Left ventricle myocardium inferior (tissue), 1 donor: ENCODE measurements at regions of chr17 and their contacts with region 1.

Region 1: GRCh38 chr17:34645594-34645993 is 66.2 kb downstream of the TMEM132E start:
- DNase-seq: no peak
- H3K4me3 ChIP-seq: no peak overlapping the region
- H3K27ac ChIP-seq: no peak overlapping the region
- H3K4me1 ChIP-seq: no peaks in the 10 kb centered on the region
- H3K27me3 ChIP-seq: peaks cover 88% of the 10 kb centered on the region
- CTCF ChIP-seq: no peak

Region 2: DNA sequence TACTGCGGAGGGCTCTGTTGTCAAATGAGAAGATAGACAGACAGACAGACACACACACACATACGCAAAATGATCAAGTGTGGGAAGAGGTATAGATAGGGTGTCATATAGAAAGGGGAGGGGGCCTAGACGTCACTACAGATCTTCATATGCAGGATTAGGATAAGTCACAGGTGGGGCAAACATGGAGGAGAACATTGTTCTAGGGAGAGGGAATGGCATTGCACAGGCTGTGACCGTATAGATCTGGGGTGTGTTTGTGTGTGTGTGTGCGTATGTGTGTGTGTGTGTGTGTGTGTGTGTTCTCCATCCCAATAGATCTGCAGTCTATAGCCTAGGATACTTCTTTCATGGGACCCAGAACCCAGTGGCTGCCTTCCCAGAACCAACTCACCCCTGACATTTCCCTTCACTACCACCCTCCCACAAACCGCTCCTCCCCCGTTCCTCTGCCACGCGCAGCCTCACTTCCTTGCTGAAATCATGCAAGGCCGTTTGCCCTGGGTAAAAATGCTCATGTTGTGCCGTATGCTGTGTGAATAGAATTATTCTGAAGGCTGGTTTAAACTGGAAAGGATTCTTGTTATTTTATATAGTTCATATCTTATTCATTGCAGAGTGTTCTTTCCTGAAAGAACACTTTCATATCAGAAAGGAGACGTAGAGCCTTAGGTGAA is 232.0 kb before region 1 on chr17:
- intact Hi-C with region 1: loop called (anchors 10 kb)
- DNase-seq: no peak
- H3K4me3 ChIP-seq: no peak overlapping the region
- H3K27ac ChIP-seq: no peak overlapping the region
- H3K4me1 ChIP-seq: no peaks in the 10 kb centered on the region
- H3K27me3 ChIP-seq: peaks cover 95% of the 10 kb centered on the region
- CTCF ChIP-seq: no peak

Region 3: DNA sequence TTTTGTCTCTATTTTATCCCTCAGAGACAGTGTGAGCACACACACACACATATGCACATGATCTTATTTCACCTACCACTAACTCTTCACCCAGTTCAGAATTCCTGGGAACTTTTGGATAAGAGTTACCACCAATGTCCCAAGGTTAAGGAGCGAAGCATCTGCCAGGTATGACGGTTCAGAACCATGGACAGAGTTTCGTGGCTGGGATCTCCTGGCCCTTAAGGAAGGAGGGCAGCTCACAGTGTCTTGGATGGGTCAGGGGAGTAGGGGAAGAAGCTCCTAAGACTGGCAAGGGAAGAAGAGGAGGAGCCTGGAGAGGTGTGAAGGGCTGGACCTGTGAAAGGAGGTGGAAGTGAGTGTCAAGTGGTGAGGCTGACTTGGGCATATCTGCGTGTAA is 89.2 kb before region 1 on chr17:
- intact Hi-C with region 1: no loop called
- DNase-seq: no peak
- H3K4me3 ChIP-seq: no peak overlapping the region
- H3K27ac ChIP-seq: no peak overlapping the region
- H3K4me1 ChIP-seq: no peaks in the 10 kb centered on the region
- H3K27me3 ChIP-seq: peaks cover 71% of the 10 kb centered on the region
- CTCF ChIP-seq: no peak

Region 4: GRCh38 chr17:34740565-34741520 is 95.2 kb after region 1 on chr17:
- intact Hi-C with region 1: no loop called
- DNase-seq: no peak
- H3K4me3 ChIP-seq: no peak overlapping the region
- H3K27ac ChIP-seq: no peak overlapping the region
- H3K4me1 ChIP-seq: no peaks in the 10 kb centered on the region
- H3K27me3 ChIP-seq: peaks cover 54% of the 10 kb centered on the region
- CTCF ChIP-seq: no peak